ENCODE measurements at regions of chr2 and their contacts with region 1.

Region 1: DNA sequence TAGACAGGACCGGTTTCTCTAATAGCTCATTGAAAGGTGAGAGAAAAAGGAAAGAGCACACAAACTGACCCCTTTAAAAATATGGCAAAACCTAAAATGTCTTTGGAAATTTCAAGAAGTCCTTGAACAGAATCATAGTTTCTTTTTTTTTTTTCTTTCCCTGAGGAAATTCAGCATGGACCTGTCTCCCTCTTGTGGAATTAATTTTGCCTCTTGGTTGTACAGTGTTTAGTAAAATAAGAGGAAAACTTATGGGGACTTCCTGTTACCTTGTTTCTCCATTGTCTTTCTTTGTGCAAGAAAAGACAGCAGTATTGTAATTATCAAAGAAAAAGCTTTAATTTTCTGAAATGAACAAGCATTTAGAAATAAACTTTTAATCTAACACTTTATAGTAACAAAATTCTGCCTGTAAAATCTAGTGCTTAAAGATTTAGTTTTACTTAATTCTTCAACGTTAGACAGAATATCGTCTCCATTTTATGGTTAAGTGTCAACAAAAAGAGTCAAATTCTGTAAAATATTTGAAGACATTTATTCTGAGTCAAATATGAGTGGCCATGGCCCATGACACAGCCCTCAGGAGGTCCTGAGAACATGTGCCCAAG is 176.3 kb upstream of the NABP1 start:
- DNase-seq: no peak
- H3K4me3 ChIP-seq: no peak overlapping the region
- H3K27ac ChIP-seq: no peak overlapping the region
- H3K4me1 ChIP-seq: no peaks in the 10 kb centered on the region
- H3K27me3 ChIP-seq: no peaks in the 10 kb centered on the region
- CTCF ChIP-seq: peak in 3 of 4 experiments; percentile 18 to 53 (median 27)
- EP300 ChIP-seq: no peak
- POLR2A ChIP-seq: no peak

Region 2: GRCh38 chr2:191165176-191165643 is 336.5 kb before region 1 on chr2:
- intact Hi-C with region 1: loop called (anchors 5 kb)
- DNase-seq: no peak
- H3K4me3 ChIP-seq: no peak overlapping the region
- H3K27ac ChIP-seq: no peak overlapping the region
- H3K4me1 ChIP-seq: peaks cover 0 to 9% (median 0%) of the 10 kb centered on the region in 4 donors
- H3K27me3 ChIP-seq: no peaks in the 10 kb centered on the region
- CTCF ChIP-seq: peak in 3 of 4 experiments; percentile 16 to 59 (median 22)
- EP300 ChIP-seq: no peak
- POLR2A ChIP-seq: no peak

Region 3: DNA sequence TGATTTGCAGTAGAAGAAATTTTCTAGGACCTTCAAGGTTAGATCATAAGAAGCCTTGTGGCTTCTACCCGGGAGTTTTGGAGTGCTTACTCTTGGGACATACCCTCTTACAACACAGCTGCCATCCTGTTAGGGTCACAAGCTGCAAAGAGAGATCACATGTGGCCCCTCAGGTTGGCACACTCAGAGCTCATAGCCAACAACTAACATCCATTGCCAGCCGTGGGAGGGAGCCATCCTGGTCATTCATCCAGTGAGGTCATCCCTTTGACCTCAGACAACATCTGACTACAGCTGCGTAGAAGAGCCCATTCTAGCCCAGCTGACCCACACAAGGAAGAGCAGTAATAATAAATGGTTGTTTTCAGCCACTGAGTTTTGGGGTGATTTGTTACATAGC is 99.4 kb after region 1 on chr2:
- intact Hi-C with region 1: no loop called
- DNase-seq: no peak
- H3K4me3 ChIP-seq: no peak overlapping the region
- H3K27ac ChIP-seq: no peak overlapping the region
- H3K4me1 ChIP-seq: no peaks in the 10 kb centered on the region
- H3K27me3 ChIP-seq: no peaks in the 10 kb centered on the region
- CTCF ChIP-seq: no peak
- EP300 ChIP-seq: no peak
- POLR2A ChIP-seq: no peak